Activated naive CD4-positive, alpha-beta T cell treated with anti-CD3 and anti-CD28 coated beads for 36 hours (primary cell): ENCODE measurements at regions of chr1 and their contacts with region 1.

Region 1: GRCh38 chr1:235763962-235764361 is 102.7 kb downstream of the LYST start:
- DNase-seq: peak; percentile 52
- H3K4me3 Mint-ChIP-seq: no peak overlapping the region
- H3K27ac Mint-ChIP-seq: no peak overlapping the region
- H3K4me1 Mint-ChIP-seq: peaks cover 10% of the 10 kb centered on the region
- H3K27me3 Mint-ChIP-seq: no peaks in the 10 kb centered on the region

Region 2: DNA sequence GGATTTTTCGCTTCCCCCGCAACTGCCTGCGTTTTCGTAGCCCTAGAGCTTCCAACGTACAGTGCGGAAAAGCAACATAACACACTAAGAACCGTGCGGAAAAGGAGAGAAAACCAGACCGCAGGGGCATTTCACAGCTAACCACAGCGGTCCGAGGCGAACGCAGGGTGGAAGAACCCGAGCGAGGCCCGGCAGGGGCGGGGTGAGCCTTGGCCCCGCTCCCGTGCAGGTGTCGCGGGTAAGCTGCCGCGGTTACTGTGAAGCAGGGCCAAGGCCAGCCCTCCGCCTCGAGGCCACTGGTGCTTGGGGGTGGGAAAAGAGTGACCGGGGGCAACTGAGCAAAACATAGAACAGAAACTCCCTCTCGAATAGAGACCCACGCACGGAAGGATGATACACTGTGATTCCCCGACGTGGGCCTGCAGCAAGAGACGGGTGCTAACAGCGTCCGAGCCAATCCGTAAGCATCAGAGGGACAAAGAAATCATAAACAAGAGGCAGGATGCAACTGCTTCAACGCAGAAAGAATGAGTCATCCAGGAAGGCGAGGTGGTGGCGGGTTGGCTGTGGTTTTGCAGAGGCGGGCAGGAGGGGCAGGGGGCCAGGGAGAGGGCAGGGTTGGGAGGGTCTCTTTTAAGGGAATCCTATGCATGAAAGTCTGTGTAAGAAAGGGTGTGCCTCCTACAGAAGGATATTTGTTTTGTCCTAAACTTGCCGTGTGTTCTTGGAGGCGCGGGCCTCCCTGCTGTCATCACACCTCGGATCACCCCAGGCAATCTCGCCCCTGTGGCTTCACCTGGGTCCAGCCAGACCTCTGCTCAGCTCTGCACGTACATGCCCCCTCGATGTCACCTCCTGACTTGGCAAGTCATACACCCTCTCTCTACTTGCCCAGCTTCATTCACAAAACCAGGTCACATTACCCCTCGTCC is 121.7 kb before region 1 on chr1:
- CTCF ChIA-PET with region 1: no interaction called
- intact Hi-C with region 1: loop called (anchors 1 kb)
- DNase-seq: peak; percentile 84
- H3K4me3 Mint-ChIP-seq: peak overlapping the region; percentile 60
- H3K27ac Mint-ChIP-seq: peak overlapping the region; percentile 61
- H3K4me1 Mint-ChIP-seq: peaks cover 18% of the 10 kb centered on the region
- H3K27me3 Mint-ChIP-seq: peaks cover 30% of the 10 kb centered on the region

Region 3: DNA sequence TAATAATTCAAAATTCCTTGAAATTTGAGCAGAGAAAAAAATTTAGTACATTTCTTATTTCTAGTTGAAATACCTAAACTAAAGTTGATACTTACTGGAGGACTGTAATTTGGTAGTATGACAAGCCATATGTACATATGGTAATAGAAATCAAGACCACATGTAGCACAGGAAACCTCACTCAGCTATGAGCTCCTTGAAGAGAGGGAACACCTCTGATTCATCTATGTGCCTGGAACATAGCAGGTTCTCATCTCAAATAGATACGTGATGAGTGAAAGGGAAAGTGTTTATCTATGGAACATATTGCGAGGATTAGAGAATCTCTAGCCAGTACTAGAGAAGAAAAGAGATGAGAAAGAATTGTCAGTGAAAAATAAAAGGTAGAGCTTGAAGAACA is 66.5 kb before region 1 on chr1:
- CTCF ChIA-PET with region 1: no interaction called
- intact Hi-C with region 1: loop called (anchors 1 kb)
- DNase-seq: peak; percentile 37
- H3K4me3 Mint-ChIP-seq: no peak overlapping the region
- H3K27ac Mint-ChIP-seq: peak overlapping the region; percentile 82
- H3K4me1 Mint-ChIP-seq: peaks cover 18% of the 10 kb centered on the region
- H3K27me3 Mint-ChIP-seq: no peaks in the 10 kb centered on the region